Activated CD8-positive, alpha-beta memory T cell treated with anti-CD3 and anti-CD28 coated beads, Interleukin-2, amount 10 ng/mL, durations not matched to agents 7 days and 5 days (primary cell): ENCODE measurements at regions of chr20 and their contacts with region 1.

Region 1: GRCh38 chr20:31560094-31560899 is 44.8 kb upstream of the ID1 start:
- DNase-seq: peak; percentile 83
- ATAC-seq: peak; percentile 71
- H3K4me3 Mint-ChIP-seq: no peak overlapping the region
- H3K27ac Mint-ChIP-seq: peak overlapping the region; percentile 82
- H3K4me1 Mint-ChIP-seq: peaks cover 17% of the 10 kb centered on the region
- H3K27me3 Mint-ChIP-seq: no peaks in the 10 kb centered on the region

Region 2: GRCh38 chr20:31547017-31547675 is 13.2 kb before region 1 on chr20:
- CTCF ChIA-PET with region 1: interaction called, 26 read pairs
- DNase-seq: peak; percentile 89
- ATAC-seq: peak; percentile 86
- H3K4me3 Mint-ChIP-seq: peak overlapping the region; percentile 85
- H3K27ac Mint-ChIP-seq: peak overlapping the region; percentile 95
- H3K4me1 Mint-ChIP-seq: peaks cover 36% of the 10 kb centered on the region
- H3K27me3 Mint-ChIP-seq: no peaks in the 10 kb centered on the region